Activated CD8-positive, alpha-beta T cell treated with anti-CD3 and anti-CD28 coated beads for 36 hours (primary cell): ENCODE measurements at regions of chr20 and their contacts with region 1.

Region 1: DNA sequence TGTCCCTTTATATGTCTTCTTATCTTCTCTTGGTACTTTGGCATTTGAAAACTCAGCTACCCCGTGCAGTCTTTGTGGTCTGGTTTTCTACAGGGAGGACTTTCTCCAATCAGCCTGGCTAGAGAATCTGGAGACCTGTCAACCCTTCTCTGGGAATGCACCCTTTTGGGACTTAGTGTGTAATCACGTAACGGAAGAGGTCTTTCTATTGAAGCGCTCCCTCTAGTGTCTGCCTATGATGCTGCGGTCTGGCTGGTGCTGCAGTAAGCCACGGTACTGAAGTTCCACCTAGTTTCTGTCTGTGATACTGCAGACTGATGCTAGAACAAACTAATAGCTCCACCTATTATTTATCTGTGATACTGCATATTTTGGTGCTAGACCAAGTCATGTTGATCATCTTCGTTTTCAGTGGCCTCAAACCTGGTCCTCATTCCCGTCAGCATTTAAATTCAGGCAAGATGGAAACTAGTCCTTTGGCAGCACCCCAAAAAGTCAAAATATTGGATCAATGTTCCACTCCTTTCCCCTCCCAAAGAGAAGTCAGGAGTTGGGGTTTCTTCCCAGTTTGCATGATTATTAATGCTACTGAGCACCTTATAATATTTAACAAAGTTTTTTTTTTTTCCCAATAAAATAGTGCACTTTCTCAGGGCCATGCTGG is 12.5 kb upstream of the SIRPB2 start:
- DNase-seq: peak; percentile 89
- ATAC-seq: peak; percentile 100
- H3K4me3 Mint-ChIP-seq: no peak overlapping the region
- H3K27ac Mint-ChIP-seq: no peak overlapping the region
- H3K4me1 Mint-ChIP-seq: peaks cover 4% of the 10 kb centered on the region
- H3K27me3 Mint-ChIP-seq: peaks cover 26% of the 10 kb centered on the region
- CTCF ChIP-seq: peak; percentile 99

Region 2: DNA sequence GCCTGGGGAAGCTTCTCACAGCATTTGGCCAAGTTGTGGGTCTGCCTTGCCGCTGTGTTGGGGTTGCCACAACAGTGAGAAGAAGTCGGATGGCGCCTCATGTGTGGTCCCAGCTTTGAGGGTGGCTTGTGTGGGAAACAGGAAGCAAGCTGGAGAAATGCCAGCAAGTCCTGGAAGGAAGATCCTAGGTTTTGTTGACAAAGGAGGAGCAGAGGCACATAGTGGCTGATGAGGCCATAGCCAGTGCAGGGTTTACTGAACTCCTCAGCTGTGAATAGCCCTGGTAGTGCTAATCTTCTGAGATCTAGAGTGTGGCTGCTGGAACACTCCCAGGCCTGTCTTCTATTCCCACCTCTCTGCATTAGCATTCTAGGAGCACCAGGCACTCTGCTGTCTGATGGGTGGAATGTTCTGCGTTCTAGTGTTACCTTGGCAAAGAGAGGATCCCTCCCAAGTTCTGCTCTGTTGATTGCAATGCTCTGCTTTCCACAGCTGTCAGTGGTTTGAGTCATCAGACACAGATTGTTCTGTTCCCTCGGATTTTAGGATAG is 212.4 kb before region 1 on chr20:
- CTCF ChIA-PET with region 1: no interaction called
- POLR2A ChIA-PET with region 1: no interaction called
- intact Hi-C with region 1: no loop called
- DNase-seq: no peak
- ATAC-seq: no peak
- H3K4me3 Mint-ChIP-seq: no peak overlapping the region
- H3K27ac Mint-ChIP-seq: no peak overlapping the region
- H3K4me1 Mint-ChIP-seq: peaks cover 39% of the 10 kb centered on the region
- H3K27me3 Mint-ChIP-seq: no peaks in the 10 kb centered on the region
- CTCF ChIP-seq: no peak

Region 3: GRCh38 chr20:1304710-1305515 is 198.8 kb before region 1 on chr20:
- CTCF ChIA-PET with region 1: interaction called, 10 read pairs
- POLR2A ChIA-PET with region 1: no interaction called
- intact Hi-C with region 1: no loop called
- DNase-seq: no peak
- ATAC-seq: no peak
- H3K4me3 Mint-ChIP-seq: no peak overlapping the region
- H3K27ac Mint-ChIP-seq: peak overlapping the region; percentile 25
- H3K4me1 Mint-ChIP-seq: peaks cover 15% of the 10 kb centered on the region
- H3K27me3 Mint-ChIP-seq: no peaks in the 10 kb centered on the region
- CTCF ChIP-seq: no peak

Region 4: GRCh38 chr20:1466211-1467081 is 37.2 kb before region 1 on chr20 and contains the start of gene NSFL1C:
- CTCF ChIA-PET with region 1: interaction called, 44 read pairs
- POLR2A ChIA-PET with region 1: no interaction called
- intact Hi-C with region 1: no loop called
- DNase-seq: peak; percentile 96
- ATAC-seq: peak; percentile 97
- H3K4me3 Mint-ChIP-seq: peak within 1 kb of the TSS; percentile 83
- H3K27ac Mint-ChIP-seq: peak within 1 kb of the TSS; percentile 79
- H3K4me1 Mint-ChIP-seq: peaks cover 46% of the 10 kb centered on the region
- H3K27me3 Mint-ChIP-seq: peaks cover 4% of the 10 kb centered on the region
- CTCF ChIP-seq: peak; percentile 100
- total RNA-seq, gene NSFL1C: 67.2 to 67.9 TPM

Region 5: GRCh38 chr20:1484438-1485116 is 19.1 kb before region 1 on chr20:
- CTCF ChIA-PET with region 1: interaction called, 21 read pairs
- POLR2A ChIA-PET with region 1: no interaction called
- intact Hi-C with region 1: no loop called
- DNase-seq: no peak
- ATAC-seq: no peak
- H3K4me3 Mint-ChIP-seq: no peak overlapping the region
- H3K27ac Mint-ChIP-seq: no peak overlapping the region
- H3K4me1 Mint-ChIP-seq: no peaks in the 10 kb centered on the region
- H3K27me3 Mint-ChIP-seq: peaks cover 26% of the 10 kb centered on the region
- CTCF ChIP-seq: no peak

Region 6: DNA sequence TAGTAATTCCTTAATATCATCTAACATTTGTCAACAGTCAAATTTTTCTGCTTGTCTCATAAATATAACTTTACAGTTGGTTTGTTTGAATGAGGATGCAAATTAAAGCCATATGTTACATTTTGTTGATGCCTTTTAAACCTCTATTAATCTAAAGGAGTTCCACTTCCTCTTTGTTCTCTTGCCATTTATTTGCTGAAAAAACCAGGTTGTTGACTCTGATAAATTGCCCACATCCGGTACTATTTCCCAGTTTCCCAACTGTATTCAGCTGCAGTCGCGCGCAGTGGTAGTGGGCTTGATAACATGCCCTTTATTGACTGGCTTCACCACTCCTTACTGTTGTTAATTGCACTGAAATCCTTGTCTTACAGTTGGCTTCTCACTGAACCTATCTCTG is 20.3 kb after region 1 on chr20:
- CTCF ChIA-PET with region 1: interaction called, 28 read pairs
- POLR2A ChIA-PET with region 1: no interaction called
- intact Hi-C with region 1: no loop called
- DNase-seq: no peak
- ATAC-seq: no peak
- H3K4me3 Mint-ChIP-seq: no peak overlapping the region
- H3K27ac Mint-ChIP-seq: no peak overlapping the region
- H3K4me1 Mint-ChIP-seq: peaks cover 2% of the 10 kb centered on the region
- H3K27me3 Mint-ChIP-seq: peaks cover 4% of the 10 kb centered on the region
- CTCF ChIP-seq: no peak

Region 7: DNA sequence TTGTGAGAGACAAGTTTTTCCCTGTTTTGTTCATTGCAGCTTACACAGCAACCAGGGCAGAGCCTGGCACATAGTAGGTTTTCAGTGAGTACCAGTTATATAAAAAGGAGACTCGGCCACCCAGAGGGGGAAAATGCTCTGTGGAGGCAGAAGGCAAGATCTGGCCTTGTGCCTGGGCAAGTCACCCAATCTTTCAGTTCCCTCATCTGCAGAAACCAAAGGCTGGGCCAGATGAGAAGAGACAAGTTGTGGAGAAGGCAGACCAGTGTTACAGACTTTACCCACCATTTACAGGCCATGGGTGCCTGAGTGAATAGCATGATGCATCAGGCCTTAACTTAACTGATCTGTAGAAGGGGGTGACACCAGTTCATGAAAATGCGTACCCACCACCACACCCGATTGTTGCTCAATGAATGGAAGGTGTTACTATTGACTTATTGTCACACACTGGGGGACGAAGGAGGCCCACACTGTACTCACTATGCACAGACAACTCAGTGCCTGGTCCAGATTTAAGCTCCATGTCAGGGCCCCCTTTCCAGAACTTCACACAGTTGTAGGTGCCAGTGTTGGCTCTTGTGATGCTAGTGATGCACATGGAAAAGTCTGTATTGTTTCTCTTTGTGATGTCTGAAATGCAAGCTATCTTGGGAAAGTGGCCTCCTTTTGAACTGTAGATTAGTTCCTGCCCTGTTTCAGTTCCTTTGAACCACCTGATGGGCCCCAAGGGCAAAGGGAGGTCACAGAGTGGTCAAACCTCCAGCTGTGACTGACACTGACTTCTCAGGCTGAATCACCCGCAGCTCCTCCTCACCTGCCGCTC is 218.2 kb after region 1 on chr20:
- CTCF ChIA-PET with region 1: interaction called, 10 read pairs
- POLR2A ChIA-PET with region 1: no interaction called
- intact Hi-C with region 1: no loop called
- DNase-seq: peak; percentile 39
- ATAC-seq: peak; percentile 73
- H3K4me3 Mint-ChIP-seq: no peak overlapping the region
- H3K27ac Mint-ChIP-seq: no peak overlapping the region
- H3K4me1 Mint-ChIP-seq: peaks cover 18% of the 10 kb centered on the region
- H3K27me3 Mint-ChIP-seq: no peaks in the 10 kb centered on the region
- CTCF ChIP-seq: no peak

Region 8: DNA sequence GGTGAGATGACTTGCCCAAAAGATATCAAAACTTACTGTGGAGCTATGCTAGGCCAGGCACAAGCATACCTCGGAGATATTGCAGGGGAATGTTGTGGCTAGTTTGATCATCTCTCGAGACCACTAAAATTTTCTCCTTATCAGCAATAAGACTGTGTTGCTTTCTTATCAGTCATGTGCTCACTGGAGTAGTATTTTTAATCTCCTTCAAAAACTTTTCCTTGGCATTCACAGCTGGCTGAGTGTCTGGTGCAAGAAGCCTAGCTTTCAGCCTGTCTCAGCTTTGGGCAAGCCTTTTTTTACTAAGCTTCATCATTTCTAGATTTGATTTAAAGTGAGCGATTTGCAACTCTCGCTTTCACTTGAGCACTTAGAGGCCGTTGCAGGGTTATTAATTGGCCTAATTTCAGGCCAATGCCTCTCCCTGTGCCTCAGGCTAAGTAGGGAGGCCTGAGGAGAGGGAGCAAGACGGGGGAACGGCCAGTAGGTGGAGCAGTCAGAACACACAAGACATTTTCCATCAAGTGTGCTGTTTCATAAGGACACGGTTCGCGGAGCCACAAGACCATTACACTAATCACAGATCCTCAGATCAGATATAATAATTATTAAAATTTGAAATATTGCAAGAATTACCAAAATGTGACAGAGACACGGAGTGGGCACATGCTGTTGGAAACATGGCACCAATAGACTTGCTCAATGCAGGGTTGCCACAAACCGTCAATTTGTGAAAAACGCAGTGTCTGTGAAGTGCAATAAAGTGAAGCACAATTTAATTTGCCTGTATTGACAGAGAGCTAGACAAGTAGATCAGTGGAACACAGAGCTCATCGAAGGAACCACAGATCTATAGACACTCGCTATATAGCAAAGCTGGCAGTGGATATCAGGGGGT is 260.7 kb after region 1 on chr20:
- CTCF ChIA-PET with region 1: interaction called, 25 read pairs
- POLR2A ChIA-PET with region 1: no interaction called
- intact Hi-C with region 1: no loop called
- DNase-seq: peak; percentile 84
- ATAC-seq: peak; percentile 94
- H3K4me3 Mint-ChIP-seq: no peak overlapping the region
- H3K27ac Mint-ChIP-seq: no peak overlapping the region
- H3K4me1 Mint-ChIP-seq: no peaks in the 10 kb centered on the region
- H3K27me3 Mint-ChIP-seq: no peaks in the 10 kb centered on the region
- CTCF ChIP-seq: peak; percentile 88